ENCODE measurements at regions of chr11 and their contacts with region 1.

Region 1: DNA sequence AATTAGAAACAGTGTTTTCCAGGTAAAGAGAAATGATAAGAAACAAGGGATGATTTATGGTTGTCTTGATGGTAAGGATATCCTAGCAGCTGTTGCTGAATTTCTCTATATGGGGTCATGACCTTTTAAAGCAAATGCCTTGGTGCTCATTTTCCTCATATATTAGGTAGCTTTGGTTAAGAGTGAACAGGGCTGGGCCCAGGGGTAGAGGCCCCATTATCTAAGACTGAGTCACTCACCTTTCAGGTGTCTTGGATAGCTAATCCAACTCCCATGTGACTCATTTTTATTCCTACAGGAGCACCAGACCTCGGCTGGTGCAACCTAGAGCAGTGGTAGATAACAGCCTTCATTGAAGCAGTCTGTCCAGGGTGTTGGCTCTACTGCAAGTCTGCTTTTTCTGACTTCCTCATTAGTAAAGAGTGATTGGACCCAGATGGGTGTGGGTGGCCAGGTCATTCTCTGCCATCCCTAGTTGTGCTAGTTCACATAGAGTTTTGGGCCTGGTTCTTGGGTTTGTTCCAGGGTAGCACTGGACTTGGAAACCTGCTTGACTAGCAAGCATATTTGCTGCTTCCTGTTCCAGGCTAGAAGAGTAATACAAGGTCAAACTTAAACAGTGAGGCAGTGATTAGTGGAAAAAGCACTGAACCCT is 37.4 kb downstream of the CTNND1 start:
- DNase-seq: no peak
- ATAC-seq: peak; percentile 88
- H3K4me3 ChIP-seq: no peak overlapping the region
- H3K27ac ChIP-seq: peak overlapping the region; percentile 58
- H3K4me1 ChIP-seq: peaks cover 42% of the 10 kb centered on the region
- H3K27me3 ChIP-seq: no peaks in the 10 kb centered on the region
- CTCF ChIP-seq: no peak

Region 2: DNA sequence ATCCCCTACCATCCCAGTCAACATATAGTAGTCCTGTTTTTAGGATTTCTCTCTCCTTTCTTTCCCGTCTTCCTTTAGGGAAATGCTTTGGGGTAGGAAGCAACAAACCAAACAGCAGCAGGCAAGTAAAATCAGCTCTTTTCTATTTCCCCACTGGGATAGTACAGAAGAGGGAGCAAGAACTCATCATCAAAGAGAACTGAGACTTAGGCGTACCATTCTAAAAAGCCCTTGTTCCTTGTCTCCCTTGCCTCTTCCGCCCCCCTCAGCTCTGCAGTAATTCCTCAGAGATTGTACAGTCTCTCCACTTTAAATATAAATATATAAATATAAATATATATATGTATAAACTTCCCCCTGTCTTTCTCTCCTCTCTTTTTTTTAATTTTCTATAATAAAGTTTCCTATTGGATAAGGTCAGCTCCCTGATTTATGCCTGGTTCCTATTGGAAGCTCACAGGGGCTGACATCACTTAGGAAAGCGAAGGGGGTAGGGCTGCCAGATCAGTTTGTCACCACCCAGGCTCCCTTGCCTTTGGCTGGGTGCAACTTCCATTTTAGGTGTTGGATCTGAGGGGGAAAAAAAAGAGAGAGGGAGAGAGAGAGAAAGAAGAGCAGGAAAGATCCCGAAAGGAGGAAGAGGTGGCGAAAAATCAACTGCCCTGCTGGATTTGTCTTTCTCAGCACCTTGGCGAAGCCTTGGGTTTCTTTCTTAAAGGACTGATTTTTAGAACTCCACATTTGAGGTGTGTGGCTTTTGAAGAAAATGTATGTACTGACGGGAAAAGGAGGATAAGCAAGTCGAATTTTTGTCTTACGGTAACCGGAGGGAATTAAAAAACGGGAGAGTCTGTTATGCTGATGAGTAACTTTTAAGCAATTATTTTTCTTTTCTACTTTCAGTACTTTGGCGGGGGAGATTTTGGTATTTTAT is 37.5 kb before region 1 on chr11 and contains the start of gene CTNND1:
- intact Hi-C with region 1: loop called (anchors 5 kb)
- DNase-seq: peak; percentile 82
- ATAC-seq: peak; percentile 100
- H3K4me3 ChIP-seq: peak within 1 kb of the TSS; percentile 57
- H3K27ac ChIP-seq: peak within 1 kb of the TSS; percentile 85
- H3K4me1 ChIP-seq: peaks cover 24% of the 10 kb centered on the region
- H3K27me3 ChIP-seq: no peaks in the 10 kb centered on the region
- CTCF ChIP-seq: no peak
- total RNA-seq, gene CTNND1: 245 TPM